ENCODE measurements at regions of chr3 and their contacts with region 1.

Region 1: GRCh38 chr3:185815391-185816282 is 9.2 kb downstream of the IGF2BP2 start:
- DNase-seq: no peak
- H3K4me3 ChIP-seq: no peak overlapping the region
- CTCF ChIP-seq: no peak

Region 2: GRCh38 chr3:185687271-185687878 is 128.3 kb before region 1 on chr3:
- in situ Hi-C with region 1: loop called (anchors 5 kb)
- DNase-seq: no peak
- H3K4me3 ChIP-seq: no peak overlapping the region
- CTCF ChIP-seq: no peak

Region 3: GRCh38 chr3:185744997-185745843 is 70.4 kb before region 1 on chr3:
- in situ Hi-C with region 1: loop called (anchors 5 kb)
- DNase-seq: peak; percentile 58
- H3K4me3 ChIP-seq: no peak overlapping the region
- CTCF ChIP-seq: no peak

Measured in astrocyte of the cerebellum (primary cell).